ENCODE measurements at regions of chr19 and their contacts with region 1.

Region 1: DNA sequence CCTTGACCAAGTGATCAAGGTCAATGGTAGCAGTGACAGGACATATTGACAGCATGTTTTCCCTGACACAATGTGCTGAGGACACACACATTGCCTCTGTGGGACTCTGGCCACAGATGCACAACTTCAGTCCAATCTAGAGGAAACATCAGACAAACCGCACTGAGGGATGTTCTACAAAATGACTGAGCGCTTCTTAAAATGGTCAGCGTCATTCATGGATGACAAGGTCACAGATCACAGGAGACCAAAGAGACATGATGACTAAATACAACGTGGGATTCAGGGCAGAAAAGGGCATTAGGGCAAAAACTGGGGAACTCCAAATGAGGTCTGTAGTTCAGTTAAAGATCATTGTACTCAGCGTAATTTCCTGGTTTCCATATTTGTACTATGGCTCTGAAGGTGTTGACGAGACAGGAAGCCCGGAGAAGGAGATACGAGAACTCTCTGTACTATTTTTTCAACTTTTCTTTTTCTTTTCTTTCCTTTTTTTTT is 20.6 kb downstream of the PBX4 start:
- DNase-seq: peak; percentile 99
- ATAC-seq: peak; percentile 83
- H3K4me3 ChIP-seq: no peak overlapping the region
- H3K27ac ChIP-seq: peak overlapping the region; percentile 81
- H3K4me1 ChIP-seq: peaks cover 62% of the 10 kb centered on the region
- H3K27me3 ChIP-seq: no peaks in the 10 kb centered on the region
- CTCF ChIP-seq: no peak
- EP300 ChIP-seq: peak; percentile 83 to 87; a peak in 3 of 4 replicates
- POLR2A ChIP-seq: peak; percentile 71
- RAD21 ChIP-seq: no peak

Region 2: GRCh38 chr19:19485161-19485997 is 112.5 kb before region 1 on chr19:
- CTCF ChIA-PET with region 1: no interaction called
- POLR2A ChIA-PET with region 1: no interaction called
- RAD21 ChIA-PET with region 1: no interaction called
- SMC1A ChIA-PET with region 1: no interaction called
- in situ Hi-C with region 1: no loop called
- intact Hi-C with region 1: no loop called
- DNase-seq: no peak
- ATAC-seq: peak; percentile 42
- H3K4me3 ChIP-seq: no peak overlapping the region
- H3K27ac ChIP-seq: no peak overlapping the region
- H3K4me1 ChIP-seq: peaks cover 41% of the 10 kb centered on the region
- H3K27me3 ChIP-seq: no peaks in the 10 kb centered on the region
- CTCF ChIP-seq: no peak
- EP300 ChIP-seq: no peak
- POLR2A ChIP-seq: no peak
- RAD21 ChIP-seq: no peak

Region 3: DNA sequence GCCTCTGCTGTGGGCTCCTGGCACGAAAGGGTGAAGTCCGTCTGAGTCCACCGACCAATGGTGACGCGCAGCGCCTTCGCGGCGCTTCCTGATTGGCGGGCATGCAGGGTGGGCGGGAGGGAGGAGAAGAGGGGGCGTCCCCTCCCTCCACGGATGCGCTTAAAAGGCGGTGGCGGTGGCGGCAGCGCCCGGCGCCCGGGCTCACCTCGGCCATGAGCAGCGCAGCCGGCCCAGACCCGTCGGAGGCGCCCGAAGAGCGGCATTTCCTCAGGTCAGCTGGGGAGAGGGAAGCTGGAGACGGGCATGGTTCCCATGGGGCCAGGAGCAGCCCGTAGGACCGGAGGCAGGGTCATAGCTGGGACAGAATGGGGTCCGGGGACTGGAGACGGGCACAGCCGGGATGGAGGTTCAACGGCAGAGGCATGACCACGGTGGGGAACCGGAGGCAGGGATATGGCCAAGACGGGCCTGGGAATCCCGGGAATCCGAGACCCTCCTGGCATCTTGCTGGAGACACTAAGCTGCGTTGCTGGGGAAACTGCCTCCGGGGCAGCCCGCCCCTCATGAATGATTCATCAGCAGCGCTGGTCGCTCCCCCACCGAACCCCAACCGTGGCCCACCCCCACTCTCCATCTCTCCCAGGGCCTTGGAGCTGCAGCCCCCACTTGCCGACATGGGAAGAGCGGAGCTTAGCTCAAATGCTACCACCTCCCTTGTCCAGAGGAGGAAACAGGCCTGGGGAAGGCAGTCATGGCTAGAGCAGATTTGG is 69.0 kb before region 1 on chr19 and contains the start of gene YJEFN3:
- CTCF ChIA-PET with region 1: no interaction called
- POLR2A ChIA-PET with region 1: no interaction called
- RAD21 ChIA-PET with region 1: no interaction called
- SMC1A ChIA-PET with region 1: no interaction called
- in situ Hi-C with region 1: no loop called
- intact Hi-C with region 1: no loop called
- DNase-seq: no peak
- ATAC-seq: no peak
- H3K4me3 ChIP-seq: no peak within 1 kb of the TSS
- H3K27ac ChIP-seq: no peak within 1 kb of the TSS
- H3K4me1 ChIP-seq: peaks cover 29% of the 10 kb centered on the region
- H3K27me3 ChIP-seq: no peaks in the 10 kb centered on the region
- CTCF ChIP-seq: no peak
- EP300 ChIP-seq: no peak
- POLR2A ChIP-seq: 0 out of 2 replicates have a peak, but pooled peaks have one; percentile 2
- RAD21 ChIP-seq: no peak
- polyA plus RNA-seq, gene YJEFN3: 0.05 to 0.08 TPM

Region 4: GRCh38 chr19:19610376-19611202 is 12.7 kb after region 1 on chr19:
- CTCF ChIA-PET with region 1: interaction called, 4 read pairs
- POLR2A ChIA-PET with region 1: interaction called, 16 read pairs
- RAD21 ChIA-PET with region 1: interaction called, 3 read pairs
- SMC1A ChIA-PET with region 1: interaction called, 28 read pairs
- in situ Hi-C with region 1: no loop called
- intact Hi-C with region 1: no loop called
- DNase-seq: no peak
- ATAC-seq: no peak
- H3K4me3 ChIP-seq: no peak overlapping the region
- H3K27ac ChIP-seq: no peak overlapping the region
- H3K4me1 ChIP-seq: peaks cover 3% of the 10 kb centered on the region; the same call in 1 of the 2 replicates
- H3K27me3 ChIP-seq: no peaks in the 10 kb centered on the region
- CTCF ChIP-seq: no peak
- EP300 ChIP-seq: no peak
- POLR2A ChIP-seq: no peak
- RAD21 ChIP-seq: no peak

Region 5: DNA sequence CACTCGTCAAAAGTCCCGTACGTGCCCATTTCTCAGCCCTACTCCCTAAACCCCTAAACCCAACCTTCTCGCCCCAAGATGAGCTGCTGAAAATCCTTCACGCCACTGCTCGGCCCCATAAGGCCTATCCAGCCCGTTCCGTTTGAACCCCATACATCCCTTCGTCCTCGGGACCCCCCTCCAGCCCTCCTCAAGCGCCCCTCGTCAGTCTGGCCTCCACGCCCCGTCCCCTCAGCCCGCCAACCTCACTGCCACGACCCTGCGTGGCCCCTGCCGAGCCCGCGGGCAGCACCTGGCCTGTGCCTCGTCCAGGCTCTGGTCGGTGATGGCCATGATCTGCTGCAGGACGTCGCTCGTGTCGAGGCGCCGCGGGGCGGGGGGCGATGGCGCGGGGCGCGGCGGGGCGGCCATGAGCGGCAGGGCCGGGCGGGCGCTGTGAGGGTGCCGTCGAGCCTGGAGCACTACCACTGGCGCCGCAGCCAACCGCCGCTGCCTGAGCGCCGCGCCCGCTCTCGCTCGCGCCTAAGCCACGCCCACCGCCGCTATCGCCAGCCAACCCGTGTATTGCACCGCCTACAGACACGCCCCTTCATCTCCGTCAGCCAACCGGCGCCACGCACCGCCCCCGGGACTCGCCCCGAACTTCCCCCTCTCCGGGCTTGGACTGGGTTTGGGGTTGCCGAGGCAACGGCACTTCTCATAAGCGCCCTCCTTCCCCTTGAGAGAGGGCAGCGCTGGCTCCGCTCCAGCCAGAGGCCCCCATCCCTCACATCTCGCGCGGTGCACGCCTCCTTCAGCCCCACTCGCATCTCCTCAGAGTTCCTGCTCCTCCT is 20.6 kb after region 1 on chr19 and contains the start of gene PBX4:
- CTCF ChIA-PET with region 1: interaction called, 4 read pairs
- POLR2A ChIA-PET with region 1: interaction called, 21 read pairs
- RAD21 ChIA-PET with region 1: interaction called, 4 read pairs
- SMC1A ChIA-PET with region 1: interaction called, 28 read pairs
- in situ Hi-C with region 1: no loop called
- intact Hi-C with region 1: loop called (anchors 1 kb)
- DNase-seq: peak; percentile 87
- ATAC-seq: peak; percentile 97
- H3K4me3 ChIP-seq: peak within 1 kb of the TSS; percentile 68
- H3K27ac ChIP-seq: peak within 1 kb of the TSS; percentile 37; the same call in 1 of the 2 replicates
- H3K4me1 ChIP-seq: no peaks in the 10 kb centered on the region
- H3K27me3 ChIP-seq: no peaks in the 10 kb centered on the region
- CTCF ChIP-seq: no peak
- EP300 ChIP-seq: no peak
- POLR2A ChIP-seq: peak; percentile 81
- RAD21 ChIP-seq: no peak
- polyA plus RNA-seq, gene PBX4: 0.18 to 0.75 TPM